ENCODE measurements at regions of chr11 and their contacts with region 1.

Region 1: GRCh38 chr11:6612213-6613041 is at the start of gene TAF10:
- DNase-seq: peak; percentile 100
- total RNA-seq, gene TAF10: 85.9 to 107 TPM

Region 2: DNA sequence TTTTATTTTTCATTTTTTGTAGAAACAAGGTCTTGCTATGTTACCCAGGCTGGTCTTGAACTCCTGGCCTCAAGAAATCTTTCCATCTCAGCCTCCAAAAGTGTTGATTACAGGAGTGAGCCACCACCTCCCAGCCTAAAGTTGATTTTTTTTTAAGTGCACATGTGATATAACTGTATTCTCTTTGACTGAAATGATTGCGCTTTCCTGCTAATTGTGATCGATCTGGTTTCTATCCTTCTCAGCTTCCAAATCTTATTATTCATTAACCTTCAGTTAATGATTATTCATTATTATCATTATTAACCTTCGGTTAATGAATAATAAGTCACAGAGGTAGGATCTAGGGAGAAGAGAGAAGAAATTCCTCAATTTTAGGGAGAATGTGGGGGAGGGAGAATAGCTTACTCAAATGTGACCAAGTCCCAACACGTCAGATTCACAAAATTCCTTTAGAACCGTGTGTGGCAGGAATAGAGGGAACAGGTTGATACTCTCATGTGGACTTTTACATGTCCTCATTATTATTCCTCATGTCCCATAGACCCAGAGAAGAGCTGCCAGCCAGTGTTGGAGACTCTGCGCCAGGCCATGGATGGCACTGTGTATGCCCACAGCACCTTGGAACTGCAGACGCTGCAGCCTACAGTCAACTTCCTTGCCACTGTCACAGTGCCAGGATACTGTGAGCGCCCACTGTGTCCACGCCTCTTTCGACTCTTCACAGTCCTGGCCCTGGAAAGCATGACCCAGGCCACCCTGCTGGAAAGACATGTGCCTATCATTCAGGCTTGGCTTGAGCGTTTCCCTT is 56.1 kb before region 1 on chr11:
- intact Hi-C with region 1: no loop called
- DNase-seq: no peak

Region 3: DNA sequence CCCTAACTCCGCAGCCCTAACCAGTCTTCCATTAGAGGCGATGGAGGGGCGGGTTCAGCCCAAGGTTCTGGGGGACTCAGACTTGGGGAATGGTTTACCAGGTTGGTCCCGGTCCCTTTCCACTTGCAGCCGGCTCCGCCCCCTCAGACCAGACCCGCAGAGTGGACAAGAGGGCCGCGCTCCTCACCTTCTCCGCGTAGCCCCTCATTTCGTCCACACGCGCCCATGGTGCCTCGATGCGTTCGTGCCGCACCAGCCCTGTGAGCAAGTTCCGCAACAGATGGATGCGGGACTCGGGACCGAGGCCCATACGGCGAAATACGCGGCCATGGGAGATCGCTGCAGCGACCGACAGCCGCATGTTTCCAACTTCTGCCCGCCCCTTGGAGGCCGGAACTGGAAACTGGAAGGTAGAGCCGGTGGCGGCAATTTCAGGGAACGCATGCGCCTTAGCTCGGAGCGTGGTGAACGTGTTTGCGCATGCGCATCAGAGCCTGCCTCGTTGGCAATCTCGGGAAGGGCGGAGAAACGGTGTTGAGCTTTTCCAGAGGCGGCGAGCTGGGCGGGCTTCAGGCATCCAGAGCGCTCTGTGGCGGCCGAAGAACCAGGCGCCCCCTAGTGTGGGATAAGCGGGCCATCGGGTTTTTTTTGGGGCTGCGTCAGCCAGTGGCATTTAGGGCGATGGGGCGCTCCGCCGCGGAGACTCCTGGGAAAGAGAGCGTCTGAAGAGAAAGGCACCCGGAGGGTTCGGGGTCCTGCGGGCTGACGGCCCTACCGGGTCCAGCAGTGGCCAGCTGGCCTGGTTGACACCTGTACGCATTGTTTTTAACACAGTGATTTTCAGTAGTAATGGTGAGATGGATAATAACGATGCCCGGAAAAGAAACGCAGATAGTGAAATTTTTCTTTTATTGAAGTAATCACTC is 70.8 kb after region 1 on chr11 and contains the start of gene MRPL17:
- intact Hi-C with region 1: loop called in 1 of 2 experiments (anchors 5 kb)
- DNase-seq: peak; percentile 100
- total RNA-seq, gene MRPL17: 25.6 to 28.2 TPM

Region 4: DNA sequence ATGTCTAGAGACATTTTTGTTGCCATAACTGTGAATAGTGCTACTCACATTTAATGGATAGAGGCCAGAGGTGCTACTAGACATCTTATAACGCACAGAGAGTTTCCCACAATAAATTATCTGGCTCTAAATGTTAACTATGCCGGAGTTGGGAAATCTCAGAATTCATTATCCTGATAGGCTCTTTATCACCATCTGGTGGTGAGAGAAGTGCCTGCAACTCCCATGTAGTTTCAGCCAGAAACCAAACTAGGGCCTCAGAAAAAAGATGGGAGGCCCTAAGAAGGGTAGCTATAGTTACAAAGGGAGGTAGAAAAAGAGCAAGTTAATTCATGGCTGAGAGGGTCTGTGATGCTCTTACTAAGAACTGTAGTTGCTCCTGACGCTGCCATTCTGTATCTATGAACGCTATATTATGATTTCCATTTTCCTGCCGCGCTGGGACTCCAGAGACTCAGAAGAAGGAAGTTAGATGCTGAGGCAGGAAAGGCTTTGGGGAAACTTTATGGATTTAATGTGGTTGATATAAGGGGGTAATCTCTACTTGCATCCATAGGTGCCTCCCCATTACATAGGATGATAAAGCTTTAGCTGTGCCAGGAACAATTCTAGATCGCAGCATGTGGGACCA is 93.6 kb after region 1 on chr11:
- intact Hi-C with region 1: no loop called
- DNase-seq: no peak

Measured in posterior vena cava (tissue), 2 donors.